Activated naive CD8-positive, alpha-beta T cell treated with anti-CD3 and anti-CD28 coated beads, Interleukin-2, amount 10 ng/mL, durations not matched to agents 7 days and 5 days (primary cell): ENCODE measurements at regions of chr17 and their contacts with region 1.

Region 1: DNA sequence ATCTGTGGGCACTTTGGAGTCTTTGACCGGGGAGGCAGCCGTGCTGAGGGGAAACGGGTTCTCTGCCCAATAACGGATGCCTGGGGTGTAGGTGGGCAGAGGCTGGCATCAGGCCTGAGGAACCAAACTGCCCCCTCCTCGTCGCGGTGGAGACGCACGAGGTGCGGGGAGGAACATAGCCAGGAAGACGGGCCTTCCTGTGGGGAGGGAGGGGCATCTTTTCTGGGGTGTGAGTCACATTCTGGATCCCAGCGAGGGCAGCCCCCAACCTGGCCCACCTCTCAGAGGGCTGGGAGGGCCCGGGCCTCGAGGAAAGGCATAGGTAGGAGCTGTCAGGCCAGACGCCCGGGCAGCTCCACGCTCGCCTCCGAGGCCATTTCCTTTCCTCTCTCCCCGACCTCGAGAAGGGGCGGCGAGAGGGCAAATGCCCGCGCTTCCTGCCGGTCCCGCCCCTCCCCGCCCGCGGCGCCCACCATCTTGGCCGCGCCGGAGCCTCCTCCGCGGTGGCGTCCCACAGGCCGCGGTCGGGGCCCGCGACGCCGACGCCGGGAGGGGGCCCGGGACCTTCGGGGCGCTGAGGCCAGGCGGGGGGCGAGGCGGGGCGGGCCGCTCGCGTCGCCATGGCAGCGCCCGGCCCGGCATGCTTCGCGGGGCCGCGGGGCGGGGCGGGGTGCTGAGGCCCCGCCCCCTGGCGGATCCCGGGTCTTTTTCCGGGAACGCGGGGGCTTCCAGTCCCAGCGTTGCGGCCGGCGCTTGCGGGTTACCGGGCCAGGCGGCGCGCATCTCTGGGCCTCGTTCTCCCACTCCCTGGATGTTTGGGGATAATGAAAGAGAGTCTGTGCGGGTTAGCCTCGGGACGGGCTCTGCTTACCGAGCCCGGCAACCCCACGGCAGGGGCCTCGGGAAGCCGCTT is 13.2 kb downstream of the RAI1 start:
- DNase-seq: peak; percentile 85
- ATAC-seq: peak; percentile 63
- H3K4me3 Mint-ChIP-seq: peak overlapping the region; percentile 98
- H3K27ac Mint-ChIP-seq: peak overlapping the region; percentile 94
- H3K4me1 Mint-ChIP-seq: peaks cover 63% of the 10 kb centered on the region
- H3K27me3 Mint-ChIP-seq: no peaks in the 10 kb centered on the region

Region 2: GRCh38 chr17:17641621-17642409 is 52.6 kb before region 1 on chr17:
- POLR2A ChIA-PET with region 1: no interaction called
- DNase-seq: peak; percentile 76
- ATAC-seq: peak; percentile 86
- H3K4me3 Mint-ChIP-seq: no peak overlapping the region
- H3K27ac Mint-ChIP-seq: no peak overlapping the region
- H3K4me1 Mint-ChIP-seq: no peaks in the 10 kb centered on the region
- H3K27me3 Mint-ChIP-seq: peaks cover 5% of the 10 kb centered on the region

Region 3: GRCh38 chr17:17681187-17681848 is 13.1 kb before region 1 on chr17 and contains the start of gene RAI1:
- POLR2A ChIA-PET with region 1: interaction called, 39 read pairs
- DNase-seq: peak; percentile 91
- ATAC-seq: peak; percentile 63
- H3K4me3 Mint-ChIP-seq: peak within 1 kb of the TSS; percentile 90
- H3K27ac Mint-ChIP-seq: peak within 1 kb of the TSS; percentile 90
- H3K4me1 Mint-ChIP-seq: peaks cover 36% of the 10 kb centered on the region
- H3K27me3 Mint-ChIP-seq: peaks cover 6% of the 10 kb centered on the region
- total RNA-seq, gene RAI1: 25.0 to 25.5 TPM